Transverse colon (tissue), 4 donors: ENCODE measurements at regions of chr3 and their contacts with region 1.

Region 1: GRCh38 chr3:107429320-107430181 is 52.3 kb downstream of the CCDC54 start:
- DNase-seq: peak; percentile 75
- H3K4me3 ChIP-seq: peak overlapping the region; percentile 14 to 96 (median 44)
- H3K27ac ChIP-seq: peak overlapping the region; percentile 91 to 98 (median 94)
- H3K4me1 ChIP-seq: peaks cover 0 to 29% (median 15%) of the 10 kb centered on the region in 4 donors
- H3K27me3 ChIP-seq: no peaks in the 10 kb centered on the region
- CTCF ChIP-seq: peak; percentile 79 to 90 (median 86)
- EP300 ChIP-seq: no peak
- POLR2A ChIP-seq: no peak

Region 2: GRCh38 chr3:107522510-107523288 is 93.1 kb after region 1 on chr3 and contains the start of gene BBX:
- in situ Hi-C with region 1: no loop called
- intact Hi-C with region 1: loop called (anchors 5 kb)
- DNase-seq: peak; percentile 94
- H3K4me3 ChIP-seq: peak within 1 kb of the TSS; percentile 61 to 94 (median 81)
- H3K27ac ChIP-seq: peak within 1 kb of the TSS; percentile 93 to 99 (median 96)
- H3K4me1 ChIP-seq: peaks cover 6 to 14% (median 7%) of the 10 kb centered on the region in 4 donors
- H3K27me3 ChIP-seq: no peaks in the 10 kb centered on the region
- CTCF ChIP-seq: no peak
- EP300 ChIP-seq: no peak
- POLR2A ChIP-seq: peak; percentile 85
- total RNA-seq, gene BBX: 22.5 to 39.6 (median 33.1) TPM